ENCODE measurements at regions of chr1 and their contacts with region 1.

Region 1: DNA sequence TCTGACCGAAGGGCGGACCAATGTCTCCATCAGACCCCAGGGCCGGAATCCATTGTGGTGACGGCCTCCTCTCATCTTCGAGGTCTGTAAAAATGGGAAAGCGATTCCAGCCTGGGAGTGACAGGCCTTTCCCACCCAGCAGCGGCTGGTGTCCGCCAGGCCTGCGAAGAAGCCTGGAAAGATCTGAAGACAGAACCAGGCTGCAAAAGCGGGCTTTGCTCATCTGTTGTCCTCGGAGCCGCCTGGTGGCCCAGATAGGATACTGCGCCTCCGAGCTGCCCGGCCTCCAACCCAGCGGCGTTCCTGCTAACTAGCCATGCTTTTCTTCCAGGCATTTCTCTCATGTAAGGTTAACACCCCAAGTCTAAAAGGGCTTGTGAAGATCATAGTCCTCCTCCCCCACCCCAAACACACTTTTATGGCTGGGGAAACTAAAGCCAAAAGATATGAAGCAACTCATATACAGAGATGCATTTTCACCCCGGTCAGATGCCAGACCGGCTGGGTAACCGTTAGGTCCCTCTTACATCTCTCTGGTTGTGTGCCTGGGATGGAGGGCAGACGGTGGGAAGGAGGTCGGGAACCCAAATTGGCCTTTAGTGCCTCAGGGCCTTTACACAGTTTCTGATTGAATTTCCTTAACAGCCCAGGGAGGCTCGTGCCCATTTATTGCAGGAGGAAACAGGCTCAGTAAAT is 1.9 kb upstream of the DHRS3 start:
- DNase-seq: peak; percentile 52 to 89 (median 84)
- H3K4me3 ChIP-seq: peak overlapping the region in 50 of 59 donors; percentile 51 to 83 (median 70)
- H3K27ac ChIP-seq: peak overlapping the region in 57 of 59 donors; percentile 46 to 95 (median 87)
- H3K27me3 ChIP-seq: peaks cover 0 to 9% (median 0%) of the 10 kb centered on the region in 45 donors
- CTCF ChIP-seq: peak; percentile 78 to 99 (median 95)

Region 2: DNA sequence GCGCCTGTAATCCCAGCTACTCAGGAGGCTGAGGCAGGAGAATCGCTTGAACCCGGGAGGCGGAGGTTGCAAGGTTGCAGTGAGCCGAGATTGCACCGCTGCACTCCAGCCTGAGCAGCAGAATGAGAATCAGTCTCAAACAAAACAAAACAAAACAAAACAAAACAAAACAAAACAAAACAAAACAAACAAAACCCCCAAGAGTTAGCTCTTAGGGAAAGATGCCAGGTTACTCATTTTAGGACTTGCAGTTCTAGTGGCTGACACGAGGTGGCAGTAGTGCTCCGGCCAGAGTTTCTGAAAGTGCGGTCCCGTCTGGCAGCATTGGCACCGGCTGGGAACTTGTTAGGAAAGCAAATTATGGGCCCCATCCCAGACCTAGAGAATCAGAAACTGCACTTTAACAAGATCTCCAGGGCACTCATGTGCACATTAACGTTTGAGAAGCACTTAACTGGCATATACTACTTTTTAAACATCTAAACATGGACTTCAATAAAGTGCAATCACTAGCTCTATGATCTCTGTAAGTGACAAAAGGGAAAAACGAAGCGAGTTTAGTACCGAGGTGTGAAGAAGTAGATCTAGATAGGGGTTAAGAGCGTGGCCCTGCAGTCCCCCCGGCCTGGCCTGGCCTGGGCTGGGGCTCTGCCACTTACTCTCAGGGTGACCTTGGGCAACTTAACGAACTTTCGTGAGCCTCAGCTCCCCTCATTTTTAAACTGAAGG is 495.1 kb before region 1 on chr1:
- intact Hi-C with region 1: loop called in 1 of 2 experiments (anchors 10 kb)
- DNase-seq: peak; percentile 50 to 79 (median 70)
- H3K4me3 ChIP-seq: no peak overlapping the region
- H3K27ac ChIP-seq: peak overlapping the region in 4 of 59 donors; percentile 19 to 57 (median 38)
- H3K27me3 ChIP-seq: peaks cover 0 to 5% (median 0%) of the 10 kb centered on the region in 45 donors
- CTCF ChIP-seq: peak; percentile 85 to 100 (median 97)

Region 3: GRCh38 chr1:12229835-12230548 is 389.9 kb before region 1 on chr1 and contains the start of gene VPS13D:
- intact Hi-C with region 1: loop called in 1 of 2 experiments (anchors 5 kb)
- DNase-seq: peak; percentile 58 to 86 (median 72)
- H3K4me3 ChIP-seq: peak within 1 kb of the TSS; percentile 68 to 100 (median 97)
- H3K27ac ChIP-seq: peak within 1 kb of the TSS in 50 of 59 donors; percentile 16 to 95 (median 76)
- H3K27me3 ChIP-seq: no peaks in the 10 kb centered on the region
- CTCF ChIP-seq: peak; percentile 57 to 96 (median 84)
- total RNA-seq, gene VPS13D: 83.9 to 199 (median 129) TPM

Region 4: DNA sequence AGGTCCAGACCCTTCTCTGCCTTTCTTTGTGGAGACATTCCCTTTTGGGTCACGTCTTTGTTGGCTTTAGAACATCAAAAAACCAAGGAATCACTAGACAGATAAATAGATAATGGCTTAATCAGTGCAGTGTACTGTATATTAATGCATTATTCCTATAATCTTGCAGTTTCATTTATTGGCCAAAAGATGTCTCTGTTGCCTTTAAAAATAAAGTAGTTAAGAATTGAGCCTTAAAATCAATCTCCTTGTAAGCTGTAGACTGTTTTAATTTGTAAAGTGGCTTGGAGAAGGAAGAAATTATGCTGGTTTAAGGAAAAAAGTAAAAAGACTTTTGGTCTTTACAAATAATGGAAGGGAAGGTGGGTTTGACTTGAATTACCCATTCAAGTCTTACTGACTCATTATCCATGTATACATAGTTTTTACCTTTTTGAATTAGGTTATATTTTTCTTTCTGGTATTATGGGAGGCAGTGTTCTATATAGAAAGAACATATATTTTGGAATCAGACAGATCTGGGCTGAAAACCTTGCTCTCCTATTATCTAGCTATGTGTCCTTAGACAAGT is 305.5 kb before region 1 on chr1:
- intact Hi-C with region 1: loop called (anchors 2 to 5 kb)
- DNase-seq: no peak
- H3K4me3 ChIP-seq: no peak overlapping the region
- H3K27ac ChIP-seq: peak overlapping the region in 9 of 59 donors; percentile 2 to 64 (median 30)
- H3K27me3 ChIP-seq: no peaks in the 10 kb centered on the region
- CTCF ChIP-seq: peak in 54 of 56 donors; percentile 31 to 76 (median 53)

Region 5: GRCh38 chr1:12409681-12410080 is 210.3 kb before region 1 on chr1:
- intact Hi-C with region 1: loop called in 1 of 2 experiments (anchors 2 kb)
- DNase-seq: no peak
- H3K4me3 ChIP-seq: no peak overlapping the region
- H3K27ac ChIP-seq: peak overlapping the region in 14 of 59 donors; percentile 0 to 65 (median 32)
- H3K27me3 ChIP-seq: no peaks in the 10 kb centered on the region
- CTCF ChIP-seq: no peak

Region 6: DNA sequence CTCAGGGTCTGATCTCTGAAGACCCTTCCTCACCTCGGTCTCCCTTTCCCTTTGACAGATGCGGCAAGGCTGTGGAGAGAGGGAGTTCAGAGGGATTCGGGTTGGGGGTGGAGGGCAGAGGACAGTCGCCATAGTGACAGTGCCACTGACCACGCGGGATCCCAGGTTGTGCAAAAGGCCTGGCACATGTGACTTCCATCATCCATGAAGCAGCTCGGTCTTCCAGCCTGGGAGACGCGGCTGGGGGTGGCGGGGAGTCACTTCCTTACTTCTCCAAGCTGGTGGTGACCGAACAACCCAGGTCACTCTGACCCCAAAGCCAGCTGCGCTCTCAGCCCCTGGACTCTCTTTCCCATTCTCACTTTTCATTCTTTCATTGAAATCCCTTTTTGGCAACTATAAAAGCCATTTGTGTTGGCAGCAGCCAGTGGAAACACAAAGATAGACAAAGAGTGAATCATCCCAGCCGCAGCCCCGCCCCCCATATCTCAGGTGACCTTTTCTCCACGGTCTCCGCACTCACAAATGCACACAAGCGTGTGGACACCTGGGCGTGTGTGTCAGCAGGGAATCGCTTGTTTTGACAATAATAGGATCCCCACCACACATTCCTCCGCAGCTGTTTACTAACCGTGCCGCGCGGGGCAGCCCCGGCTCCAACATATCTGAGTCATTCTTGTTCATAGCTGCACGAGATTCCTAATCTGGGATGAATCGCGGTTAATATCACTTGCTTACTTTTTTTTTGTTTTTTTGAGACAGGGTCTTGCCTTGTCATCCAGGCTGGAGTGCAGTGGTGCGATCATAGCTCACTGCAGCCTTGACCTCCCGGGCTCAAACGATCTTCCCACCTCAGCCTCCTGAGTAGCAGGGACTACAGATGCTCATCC is 70.2 kb before region 1 on chr1:
- intact Hi-C with region 1: no loop called
- DNase-seq: peak in 4 of 10 donors; percentile 22 to 47 (median 38)
- H3K4me3 ChIP-seq: peak overlapping the region in 19 of 59 donors; percentile 4 to 45 (median 24)
- H3K27ac ChIP-seq: peak overlapping the region in 4 of 59 donors; percentile 18 to 43 (median 24)
- H3K27me3 ChIP-seq: no peaks in the 10 kb centered on the region
- CTCF ChIP-seq: no peak

Measured in dorsolateral prefrontal cortex (tissue), 120 donors.